Sigmoid colon (tissue), 7 donors: ENCODE measurements at regions of chr9 and their contacts with region 1.

Region 1: DNA sequence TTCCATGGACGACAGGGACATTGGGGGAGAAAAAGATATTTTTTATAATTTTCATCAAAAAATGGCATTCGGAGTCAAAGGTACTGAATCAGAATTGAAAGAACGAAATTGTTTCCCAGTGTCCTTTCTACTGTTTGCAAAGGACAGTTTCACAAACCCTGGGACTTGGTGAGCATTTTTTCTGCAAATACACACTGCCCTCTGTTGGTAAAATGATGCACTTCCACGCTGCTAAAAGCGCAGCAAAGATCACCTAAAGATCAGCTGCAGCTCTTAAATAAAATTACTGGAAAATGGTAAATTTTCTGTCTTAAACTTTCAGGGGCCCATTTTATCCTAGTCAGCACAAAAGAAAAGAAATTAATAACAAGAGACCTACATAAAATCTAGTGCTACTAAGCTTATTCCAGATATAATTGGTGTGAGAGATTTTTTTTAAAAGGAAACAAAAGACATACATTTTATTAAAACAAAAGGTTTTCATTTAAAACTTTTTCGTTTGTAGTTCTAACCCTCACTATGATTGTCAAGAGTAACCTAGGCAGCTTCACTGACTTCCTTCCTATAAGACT is 566.0 kb downstream of the CAAP1 start:
- DNase-seq: no peak
- H3K4me3 ChIP-seq: no peak overlapping the region
- H3K27ac ChIP-seq: no peak overlapping the region
- H3K4me1 ChIP-seq: peaks cover 0 to 28% (median 18%) of the 10 kb centered on the region in 4 donors
- H3K27me3 ChIP-seq: no peaks in the 10 kb centered on the region
- CTCF ChIP-seq: peak; percentile 34 to 74 (median 50)
- EP300 ChIP-seq: no peak
- POLR2A ChIP-seq: no peak

Region 2: GRCh38 chr9:25964239-25964638 is 362.3 kb before region 1 on chr9:
- intact Hi-C with region 1: loop called (anchors 10 kb)
- DNase-seq: no peak
- H3K4me3 ChIP-seq: no peak overlapping the region
- H3K27ac ChIP-seq: no peak overlapping the region
- H3K4me1 ChIP-seq: no peaks in the 10 kb centered on the region
- H3K27me3 ChIP-seq: no peaks in the 10 kb centered on the region
- CTCF ChIP-seq: peak in 1 of 4 experiments; percentile 12
- EP300 ChIP-seq: no peak
- POLR2A ChIP-seq: no peak